ENCODE measurements at regions of chr3 and their contacts with region 1.

Region 1: GRCh38 chr3:8482960-8483665 is 18.5 kb upstream of the LMCD1 start:
- DNase-seq: peak; percentile 25 to 77
- ATAC-seq: peak; percentile 72 to 93 (median 89)
- H3K4me3 ChIP-seq: no peak overlapping the region
- H3K27ac ChIP-seq: peak overlapping the region; percentile 32 to 86 (median 66)
- H3K4me1 ChIP-seq: peaks cover 8 to 47% (median 30%) of the 10 kb centered on the region in 9 donors
- H3K27me3 ChIP-seq: no peaks in the 10 kb centered on the region
- CTCF ChIP-seq: no peak

Region 2: DNA sequence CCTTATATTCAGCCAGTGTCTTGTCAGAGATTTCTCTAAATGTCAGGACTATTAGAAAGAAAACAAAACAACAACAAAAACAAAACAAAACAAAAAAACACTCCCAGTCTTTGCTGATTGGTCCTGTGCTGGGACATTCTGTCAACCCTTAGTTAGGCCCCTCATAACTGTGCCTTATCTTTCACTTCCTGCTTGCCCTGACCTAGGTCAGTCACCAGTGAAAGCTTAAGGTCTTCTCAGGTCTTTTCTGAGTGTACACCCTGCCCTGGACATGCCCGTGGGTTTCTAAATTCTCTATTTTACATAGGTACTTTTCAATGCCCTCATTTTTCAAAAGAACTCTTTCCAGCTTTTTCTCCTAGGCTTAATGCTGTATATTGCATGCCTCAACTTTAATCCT is 1168.1 kb before region 1 on chr3:
- intact Hi-C with region 1: loop called in 1 of 10 experiments (anchors 5 kb)
- DNase-seq: no peak
- ATAC-seq: no peak
- H3K4me3 ChIP-seq: no peak overlapping the region
- H3K27ac ChIP-seq: no peak overlapping the region
- H3K4me1 ChIP-seq: peaks cover 0 to 8% (median 2%) of the 10 kb centered on the region in 9 donors
- H3K27me3 ChIP-seq: no peaks in the 10 kb centered on the region
- CTCF ChIP-seq: no peak

Region 3: DNA sequence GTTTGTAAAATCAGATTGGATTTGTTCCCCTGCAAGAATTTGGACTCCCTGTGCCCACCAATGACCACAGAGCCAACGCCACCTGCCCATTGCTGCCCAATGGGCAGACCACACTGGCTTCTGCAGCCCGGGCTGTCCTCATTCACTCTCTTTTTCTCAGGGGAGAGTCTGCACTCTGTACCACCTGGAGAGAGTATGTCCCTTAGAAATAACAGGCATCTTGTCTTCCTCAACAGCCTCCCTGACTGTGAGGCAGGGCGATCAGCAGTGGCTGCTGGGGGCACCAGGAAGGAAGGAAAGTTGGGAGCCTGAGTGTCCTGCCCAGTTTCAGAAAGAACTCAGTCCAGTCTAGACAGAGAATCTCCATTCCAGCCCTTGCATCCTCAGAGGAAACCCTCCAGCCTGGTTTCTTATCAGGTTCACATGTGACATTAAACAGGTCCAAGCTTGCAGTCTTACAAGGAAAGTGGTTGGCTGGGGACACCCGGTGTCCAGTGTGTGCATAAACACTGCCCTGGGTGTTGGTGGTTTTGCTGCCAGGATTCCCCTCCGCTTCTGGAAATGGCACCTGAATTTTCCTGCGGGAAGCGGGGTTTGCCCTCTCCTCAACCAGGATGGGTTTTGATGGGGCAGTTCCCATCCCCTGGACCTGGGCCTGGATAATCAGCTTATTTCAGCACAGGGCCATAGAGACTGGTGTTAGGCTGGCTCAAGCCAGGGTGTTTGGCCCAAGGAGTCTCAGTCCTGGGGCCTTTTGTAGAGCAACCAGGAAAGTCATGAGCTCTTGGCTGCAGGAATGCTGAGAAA is 124.3 kb after region 1 on chr3:
- intact Hi-C with region 1: loop called in 5 of 10 experiments (anchors 1 to 10 kb)
- DNase-seq: peak; percentile 64 to 80
- ATAC-seq: peak; percentile 94 to 99 (median 97)
- H3K4me3 ChIP-seq: no peak overlapping the region
- H3K27ac ChIP-seq: peak overlapping the region in 1 of 10 donors; percentile 59
- H3K4me1 ChIP-seq: peaks cover 11 to 28% (median 17%) of the 10 kb centered on the region in 9 donors
- H3K27me3 ChIP-seq: no peaks in the 10 kb centered on the region
- CTCF ChIP-seq: peak; percentile 61 to 88 (median 79)